ENCODE measurements at regions of chr11 and their contacts with region 1.

Region 1: DNA sequence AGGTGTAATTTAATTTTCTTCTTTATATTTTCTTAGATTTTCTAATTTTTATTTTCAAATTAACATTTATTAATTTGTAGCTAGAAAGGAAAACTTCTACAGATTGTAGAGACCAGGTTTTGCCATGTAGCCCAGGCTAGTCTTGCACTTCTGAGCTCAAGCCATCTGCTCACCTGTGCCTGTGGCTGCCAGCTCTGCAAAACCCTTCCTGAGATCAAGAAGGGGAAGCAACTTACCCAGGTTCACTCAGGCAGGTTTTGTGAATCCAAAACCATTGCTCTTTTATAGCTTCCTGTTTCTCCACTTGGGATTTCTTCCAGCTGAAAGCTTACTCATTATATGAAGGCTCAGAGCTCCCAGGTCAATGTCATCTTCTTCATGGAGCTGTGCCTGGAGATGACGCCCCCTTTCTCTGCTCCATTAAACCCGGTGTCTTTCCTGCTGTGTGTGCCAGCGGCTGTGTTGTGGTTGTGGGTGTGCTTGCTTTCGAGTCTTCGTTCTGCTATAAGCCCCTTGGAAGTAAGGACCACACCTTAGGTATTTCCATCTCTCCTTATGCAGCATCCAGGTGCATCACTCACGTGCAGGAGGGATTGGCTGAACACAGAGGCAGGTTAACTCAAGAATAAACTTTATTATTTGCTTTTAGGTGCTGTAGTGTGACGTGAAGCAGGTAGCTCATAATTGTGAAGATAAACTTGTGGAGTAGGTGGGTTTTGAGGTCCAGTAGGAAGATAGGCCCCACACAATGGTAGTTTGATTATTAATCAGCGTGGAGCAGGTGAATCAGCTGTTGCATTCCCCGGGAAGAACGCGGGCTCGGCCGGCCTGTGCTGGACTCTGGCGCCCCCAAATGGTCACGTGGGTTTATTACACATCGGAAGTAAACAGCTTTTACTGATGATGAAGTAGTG is 42.2 kb upstream of the INCENP start:
- DNase-seq: peak; percentile 58
- H3K4me3 ChIP-seq: no peak overlapping the region
- H3K27ac ChIP-seq: no peak overlapping the region
- H3K4me1 ChIP-seq: no peaks in the 10 kb centered on the region
- CTCF ChIP-seq: peak; percentile 99

Region 2: GRCh38 chr11:61947486-61948210 is 134.0 kb before region 1 on chr11:
- CTCF ChIA-PET with region 1: interaction called, 15 read pairs
- POLR2A ChIA-PET with region 1: no interaction called
- intact Hi-C with region 1: loop called (anchors 5 kb)
- DNase-seq: peak; percentile 78
- H3K4me3 ChIP-seq: no peak overlapping the region
- H3K27ac ChIP-seq: no peak overlapping the region
- H3K4me1 ChIP-seq: peaks cover 8% of the 10 kb centered on the region
- CTCF ChIP-seq: peak; percentile 94

Measured in OCI-LY7 (cell line).